Posterior vena cava (tissue), 2 donors: ENCODE measurements at regions of chr14 and their contacts with region 1.

Region 1: DNA sequence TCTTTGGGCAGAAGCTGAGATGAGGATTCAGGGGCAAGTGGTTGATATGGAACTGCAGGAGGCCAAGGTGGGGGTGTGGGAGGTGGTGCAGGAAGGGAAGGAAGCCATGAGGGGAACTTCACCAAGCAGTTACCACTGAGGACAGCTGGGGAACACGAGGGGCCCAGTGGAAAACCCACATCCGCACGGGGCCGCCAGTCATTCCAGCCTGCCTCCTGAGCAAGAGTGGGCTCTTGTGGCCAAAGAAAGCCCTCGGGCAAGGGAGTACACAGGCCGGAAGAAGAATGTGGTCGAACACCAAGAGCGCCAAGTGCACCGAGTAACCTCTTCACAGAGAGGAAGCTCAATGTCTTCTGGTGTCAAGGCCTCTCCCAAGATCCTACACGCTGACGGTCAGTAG is 252.2 kb upstream of the FOXN3 start:
- DNase-seq: no peak

Region 2: DNA sequence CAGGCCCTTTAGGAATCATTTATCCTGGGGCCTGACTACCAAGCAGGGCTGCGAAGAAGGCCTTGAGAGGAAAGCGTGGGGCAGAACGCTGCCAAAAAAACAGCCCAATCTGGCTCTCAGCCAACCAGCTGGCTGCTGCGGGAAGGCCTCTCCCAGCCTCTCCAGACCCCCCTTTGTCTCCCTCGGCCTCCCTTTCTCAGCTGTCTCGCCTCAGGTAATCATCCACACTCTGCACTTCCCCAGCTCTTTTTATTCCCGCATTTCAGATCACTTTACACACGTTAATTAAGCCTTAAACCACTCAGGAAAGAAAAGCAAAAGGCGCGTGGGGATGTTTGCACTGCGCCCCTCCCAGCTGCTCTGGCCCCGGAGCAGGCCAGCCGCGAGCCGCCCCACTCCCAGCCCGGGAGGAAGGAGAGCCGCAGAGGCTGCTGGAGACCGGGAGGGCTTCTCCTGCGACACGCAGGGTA is 43.9 kb before region 1 on chr14:
- intact Hi-C with region 1: loop called in 1 of 2 experiments (anchors 1 kb)
- DNase-seq: no peak

Region 3: GRCh38 chr14:89730687-89731086 is 61.5 kb after region 1 on chr14:
- intact Hi-C with region 1: no loop called
- DNase-seq: no peak